Activated CD4-positive, alpha-beta T cell treated with anti-CD3 and anti-CD28 coated beads, Interleukin-2, amount 10 ng/mL, durations not matched to agents 24 days and 14 days (primary cell): ENCODE measurements at regions of chr16 and their contacts with region 1.

Region 1: GRCh38 chr16:56425439-56425832 is at the start of gene AMFR:
- DNase-seq: peak; percentile 94
- H3K4me3 Mint-ChIP-seq: peak within 1 kb of the TSS; percentile 99
- H3K27ac Mint-ChIP-seq: peak within 1 kb of the TSS; percentile 91
- H3K4me1 Mint-ChIP-seq: peaks cover 30% of the 10 kb centered on the region
- H3K27me3 Mint-ChIP-seq: no peaks in the 10 kb centered on the region
- total RNA-seq, gene AMFR: 50.6 and 52.3 TPM in 2 replicates

Region 2: GRCh38 chr16:55955845-55956244 is 469.6 kb before region 1 on chr16:
- intact Hi-C with region 1: no loop called
- DNase-seq: no peak
- H3K4me3 Mint-ChIP-seq: no peak overlapping the region
- H3K27ac Mint-ChIP-seq: no peak overlapping the region
- H3K4me1 Mint-ChIP-seq: no peaks in the 10 kb centered on the region
- H3K27me3 Mint-ChIP-seq: peaks cover 7% of the 10 kb centered on the region

Region 3: DNA sequence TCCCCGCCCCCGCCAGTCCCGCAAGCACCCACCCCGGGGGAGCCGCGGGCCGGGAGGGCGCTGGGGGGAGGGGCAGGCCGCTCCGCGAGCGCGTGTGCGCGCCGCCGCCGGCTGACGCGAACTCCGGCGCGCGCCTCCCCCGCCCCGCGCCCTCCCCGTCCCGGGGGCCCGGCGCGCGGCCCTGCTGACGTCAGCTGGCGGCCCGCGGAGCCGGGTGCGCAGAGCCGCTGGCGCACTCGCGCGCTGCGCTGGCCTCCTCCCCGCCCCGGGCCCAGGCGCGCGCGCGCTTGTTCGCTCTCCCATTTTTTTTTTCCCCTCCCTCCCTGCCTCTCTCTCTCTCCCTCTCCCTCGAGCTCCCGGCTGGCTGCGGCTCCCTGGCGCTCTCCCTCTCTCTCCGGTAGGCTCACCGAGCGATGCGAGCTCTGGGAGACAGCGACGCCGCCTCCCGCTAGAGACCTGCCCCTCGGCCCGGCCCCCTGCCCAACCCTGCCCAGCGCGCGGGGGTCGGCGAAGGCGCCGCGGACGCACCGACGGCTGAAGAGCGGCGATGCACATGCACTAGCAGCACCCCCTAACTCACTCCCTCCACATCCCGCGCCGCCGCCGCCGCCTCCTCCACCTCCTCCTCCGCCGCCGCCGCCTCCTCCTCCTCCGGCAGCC is 234.2 kb before region 1 on chr16 and contains the start of gene GNAO1:
- intact Hi-C with region 1: loop called (anchors 10 kb)
- DNase-seq: peak; percentile 87
- H3K4me3 Mint-ChIP-seq: peak within 1 kb of the TSS; percentile 83
- H3K27ac Mint-ChIP-seq: peak within 1 kb of the TSS; percentile 66
- H3K4me1 Mint-ChIP-seq: peaks cover 28% of the 10 kb centered on the region
- H3K27me3 Mint-ChIP-seq: peaks cover 78% of the 10 kb centered on the region
- total RNA-seq, gene GNAO1: 2.0 and 2.3 TPM in 2 replicates

Region 4: DNA sequence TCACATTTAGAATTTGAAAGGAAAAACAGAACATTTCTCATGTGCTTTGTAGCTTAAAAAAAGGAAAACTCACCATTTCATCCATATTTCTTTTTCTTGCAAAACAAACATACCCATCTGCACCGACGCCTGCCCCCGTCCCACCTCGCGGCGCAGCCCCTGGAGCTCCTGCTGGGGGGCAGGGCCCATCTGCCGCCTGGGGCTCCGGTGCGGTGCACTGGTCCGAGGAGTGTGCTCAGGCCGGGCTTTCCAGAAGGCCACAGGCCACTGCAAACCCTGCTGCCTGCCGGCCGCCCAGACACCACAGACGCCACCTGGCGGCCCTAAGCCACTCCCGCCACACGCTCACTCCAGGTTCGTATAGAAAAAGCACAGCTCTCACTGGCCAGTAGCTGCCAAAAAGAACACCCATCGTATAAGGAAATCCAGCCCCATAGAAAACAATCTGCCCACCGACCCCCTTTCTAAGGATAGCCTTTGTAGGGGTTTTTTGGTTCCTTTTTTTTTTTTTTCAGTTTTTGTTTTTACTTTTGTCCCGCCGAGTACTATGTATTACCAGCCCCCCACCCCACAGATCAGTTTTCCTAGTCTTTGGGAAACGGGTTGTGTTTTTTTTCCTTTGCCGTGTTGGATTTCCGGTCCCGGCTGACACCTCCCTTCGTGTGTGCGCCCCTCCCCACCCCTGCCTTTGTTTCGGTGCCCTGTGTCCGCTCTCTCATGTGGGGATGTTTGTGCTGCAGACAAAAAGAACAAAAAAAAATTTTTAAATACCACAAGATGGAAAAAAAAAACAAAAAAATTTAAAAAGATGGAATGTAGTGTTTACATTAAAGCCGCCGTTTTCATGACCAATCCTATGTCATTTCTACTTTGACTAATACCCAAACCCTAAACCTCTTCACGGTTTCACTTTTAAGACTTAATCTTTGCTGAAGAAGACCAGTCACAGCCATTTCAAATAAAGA is 68.9 kb before region 1 on chr16:
- intact Hi-C with region 1: loop called (anchors 2 kb)
- DNase-seq: peak; percentile 88
- H3K4me3 Mint-ChIP-seq: peak overlapping the region; percentile 82
- H3K27ac Mint-ChIP-seq: peak overlapping the region; percentile 97
- H3K4me1 Mint-ChIP-seq: peaks cover 33% of the 10 kb centered on the region
- H3K27me3 Mint-ChIP-seq: no peaks in the 10 kb centered on the region

Region 5: GRCh38 chr16:56450986-56451752 is 25.7 kb after region 1 on chr16 and contains the starts of genes NUDT21 and OGFOD1:
- intact Hi-C with region 1: loop called (anchors 1 kb)
- DNase-seq: peak; percentile 97
- H3K4me3 Mint-ChIP-seq: peak within 1 kb of the TSS; percentile 94
- H3K27ac Mint-ChIP-seq: peak within 1 kb of the TSS; percentile 95
- H3K4me1 Mint-ChIP-seq: peaks cover 41% of the 10 kb centered on the region
- H3K27me3 Mint-ChIP-seq: no peaks in the 10 kb centered on the region
- total RNA-seq, gene NUDT21: 282 and 297 TPM in 2 replicates
- total RNA-seq, gene OGFOD1: 87.0 and 89.2 TPM in 2 replicates